ENCODE measurements at regions of chr2 and their contacts with region 1.

Region 1: GRCh38 chr2:74482801-74483674 is at the starts of genes CCDC142 and TTC31:
- DNase-seq: peak; percentile 97
- H3K4me3 Mint-ChIP-seq: peak within 1 kb of the TSS; percentile 91
- H3K27ac Mint-ChIP-seq: peak within 1 kb of the TSS; percentile 99
- H3K4me1 Mint-ChIP-seq: peaks cover 33% of the 10 kb centered on the region
- H3K27me3 Mint-ChIP-seq: no peaks in the 10 kb centered on the region
- total RNA-seq, gene CCDC142: 26.5 and 26.9 TPM in 2 replicates
- total RNA-seq, gene TTC31: 27.1 and 31.5 TPM in 2 replicates

Region 2: DNA sequence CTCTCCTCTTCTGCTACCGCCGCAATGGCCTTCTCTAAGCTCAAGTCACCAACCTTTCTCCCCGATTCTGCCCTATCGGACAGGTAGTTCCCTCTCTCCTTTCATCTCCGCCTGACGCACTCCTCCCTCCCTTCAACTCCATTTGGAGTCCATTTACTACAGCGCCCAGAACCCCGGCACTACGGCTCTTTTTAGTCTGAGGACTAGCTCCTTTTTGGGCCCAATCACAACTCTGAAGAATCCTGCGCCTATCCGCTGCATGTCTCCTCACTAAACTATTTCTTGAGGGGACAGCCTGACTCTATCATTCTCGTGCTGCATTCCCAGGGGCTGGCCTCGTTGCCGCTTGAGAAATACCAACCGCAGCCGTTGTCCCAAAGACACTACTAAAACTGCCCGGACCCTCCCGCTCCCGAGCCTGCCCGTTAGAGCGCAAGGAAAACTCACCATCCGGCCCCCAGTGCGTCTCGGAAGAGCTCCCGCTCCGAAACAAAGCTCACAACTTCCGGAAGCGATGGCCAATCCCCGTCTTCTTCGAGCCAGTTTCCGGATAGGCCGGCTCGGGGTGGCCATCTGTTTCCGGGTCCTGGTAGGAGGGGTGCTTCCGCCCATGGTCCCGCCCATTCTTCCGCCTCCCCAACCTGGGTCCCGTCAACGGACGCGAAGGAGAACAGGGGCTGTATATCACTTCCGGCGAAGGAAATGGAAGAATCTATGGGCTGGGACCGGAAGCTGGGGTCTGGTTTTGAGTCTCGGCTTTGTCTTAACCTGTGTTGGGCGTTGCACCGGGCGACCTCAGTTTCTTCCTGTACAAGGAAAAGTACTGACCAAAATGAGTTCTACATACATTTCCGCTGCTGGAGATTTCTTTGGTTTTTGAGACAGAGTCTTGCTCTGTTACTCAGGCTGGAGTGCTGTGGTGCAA is 745.9 kb before region 1 on chr2 and contains the start of gene TPRKB:
- intact Hi-C with region 1: loop called (anchors 1 kb)
- DNase-seq: peak; percentile 98
- H3K4me3 Mint-ChIP-seq: peak within 1 kb of the TSS; percentile 100
- H3K27ac Mint-ChIP-seq: peak within 1 kb of the TSS; percentile 91
- H3K4me1 Mint-ChIP-seq: peaks cover 10% of the 10 kb centered on the region
- H3K27me3 Mint-ChIP-seq: no peaks in the 10 kb centered on the region
- total RNA-seq, gene TPRKB: 37.6 and 38.5 TPM in 2 replicates

Region 3: DNA sequence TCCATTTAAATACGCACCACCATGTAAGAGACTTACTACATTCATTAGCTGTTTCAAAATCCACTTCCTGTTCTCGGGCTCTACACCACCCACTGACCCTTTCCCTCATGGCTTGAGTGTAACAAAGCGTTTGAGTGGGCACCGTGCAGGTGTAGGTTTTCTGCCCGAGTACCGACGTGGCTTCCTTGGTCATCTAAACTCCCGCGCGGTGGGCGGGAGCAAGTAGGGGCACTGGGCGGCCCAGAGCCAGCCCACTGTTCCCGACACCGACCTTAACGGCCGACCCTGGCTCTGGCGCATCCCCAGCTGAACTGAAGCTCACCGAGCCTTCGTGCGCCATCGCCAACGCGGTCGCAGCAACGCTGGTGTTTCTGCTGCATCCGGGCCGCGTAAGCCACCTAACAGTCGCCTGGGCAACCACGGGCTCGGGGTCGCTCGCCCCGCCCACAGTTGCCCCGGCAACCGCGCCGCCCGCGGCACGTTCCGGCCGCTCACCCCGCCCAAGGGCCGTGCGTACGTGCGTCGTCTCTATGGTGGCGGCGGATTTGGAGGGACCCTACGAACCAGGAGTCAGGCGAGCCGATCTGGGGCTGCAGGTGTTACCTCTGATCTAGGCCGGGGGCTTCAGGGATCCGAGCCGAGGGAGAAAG is 61.7 kb before region 1 on chr2 and contains the starts of genes C2orf81 and WDR54:
- intact Hi-C with region 1: loop called (anchors 2 kb)
- DNase-seq: peak; percentile 99
- H3K4me3 Mint-ChIP-seq: peak within 1 kb of the TSS; percentile 94
- H3K27ac Mint-ChIP-seq: peak within 1 kb of the TSS; percentile 96
- H3K4me1 Mint-ChIP-seq: peaks cover 20% of the 10 kb centered on the region
- H3K27me3 Mint-ChIP-seq: peaks cover 2% of the 10 kb centered on the region
- total RNA-seq, gene C2orf81: 1.7 and 2.0 TPM in 2 replicates
- total RNA-seq, gene WDR54: 72.1 and 78.2 TPM in 2 replicates

Region 4: DNA sequence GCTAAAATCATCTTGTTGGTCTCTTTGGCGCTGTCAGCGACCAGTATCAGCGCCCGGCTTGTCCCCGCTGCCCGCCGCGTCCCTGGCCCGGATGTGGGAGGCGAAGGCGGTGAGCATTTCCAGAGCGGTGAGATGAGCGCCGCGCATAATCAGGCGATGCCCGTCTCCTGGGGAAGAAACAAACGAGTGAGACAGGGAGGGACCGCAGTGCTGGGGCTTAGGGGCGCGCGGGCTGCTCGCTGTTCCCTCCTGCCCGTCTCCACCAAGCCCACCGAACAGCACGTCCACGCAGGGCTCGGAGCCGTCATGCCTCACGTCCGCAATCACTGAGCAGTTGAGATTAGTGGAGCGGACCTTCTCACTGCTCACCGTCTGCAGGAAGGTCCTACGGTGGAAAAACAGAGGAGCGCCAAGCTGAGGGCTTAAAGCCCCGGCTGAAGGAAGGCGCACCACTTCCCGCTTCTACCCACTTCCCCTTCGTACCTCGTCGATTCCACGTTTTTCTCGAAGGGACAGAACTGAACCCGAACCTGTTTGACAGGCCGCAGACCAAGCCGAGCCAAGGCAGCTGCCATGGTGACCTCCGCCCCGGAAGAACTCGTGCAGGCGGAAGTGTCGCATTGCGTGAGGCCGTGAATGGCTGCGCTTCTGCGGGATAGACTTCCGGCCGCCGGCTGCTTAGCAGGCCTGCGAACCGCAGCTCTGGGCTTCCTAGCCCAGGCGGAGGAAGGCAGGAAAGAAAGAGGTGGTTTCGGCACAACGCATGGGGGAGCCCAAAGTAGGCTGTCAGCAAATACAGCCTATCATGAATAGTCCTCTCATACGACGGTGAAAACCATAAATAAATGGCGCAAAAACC is 10.7 kb before region 1 on chr2 and contains the start of gene MRPL53:
- intact Hi-C with region 1: loop called (anchors 1 kb)
- DNase-seq: peak; percentile 99
- H3K4me3 Mint-ChIP-seq: peak within 1 kb of the TSS; percentile 99
- H3K27ac Mint-ChIP-seq: peak within 1 kb of the TSS; percentile 98
- H3K4me1 Mint-ChIP-seq: peaks cover 22% of the 10 kb centered on the region
- H3K27me3 Mint-ChIP-seq: no peaks in the 10 kb centered on the region
- total RNA-seq, gene MRPL53: 89.0 and 115 TPM in 2 replicates

Region 5: DNA sequence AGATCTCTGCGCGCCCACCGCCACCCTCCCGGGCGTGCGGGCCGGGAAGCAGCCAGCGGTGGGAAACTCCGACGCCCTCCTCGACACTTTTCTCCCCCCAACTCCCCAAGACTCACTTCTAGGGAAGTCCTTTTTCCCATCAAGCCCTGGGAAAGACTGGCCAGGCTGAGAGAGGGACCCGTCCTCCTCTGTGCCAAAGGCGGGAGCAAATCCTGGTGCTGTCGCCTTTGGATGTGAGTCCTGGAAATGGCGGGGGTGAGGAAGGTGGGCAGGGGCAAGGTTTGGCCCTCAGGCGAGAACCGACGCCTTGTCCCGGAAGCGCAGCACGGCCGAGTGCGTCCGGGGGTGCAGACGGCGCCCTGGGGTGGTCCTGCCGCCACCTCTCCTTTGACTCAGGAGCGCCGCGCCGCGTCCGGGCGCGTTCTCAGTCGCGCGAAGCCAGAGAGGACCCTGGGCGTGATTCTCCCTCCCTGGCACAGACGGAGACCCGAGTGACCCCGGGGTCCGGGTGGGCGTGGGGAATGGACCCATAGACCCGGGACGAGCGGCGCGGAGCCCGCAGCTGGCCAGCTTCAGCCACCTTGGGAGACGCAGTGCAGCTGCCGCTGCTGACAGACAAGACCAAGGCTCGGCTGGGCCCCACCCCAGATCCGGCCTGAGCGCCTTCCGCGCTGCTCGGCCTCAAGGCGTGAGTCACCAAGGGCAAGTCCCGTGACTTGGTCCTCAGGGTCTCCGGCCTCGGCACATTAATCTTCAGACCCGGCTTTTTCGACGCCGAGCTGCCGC is 19.9 kb after region 1 on chr2:
- intact Hi-C with region 1: loop called (anchors 2 kb)
- DNase-seq: peak; percentile 85
- H3K4me3 Mint-ChIP-seq: peak overlapping the region; percentile 77
- H3K27ac Mint-ChIP-seq: peak overlapping the region; percentile 58
- H3K4me1 Mint-ChIP-seq: peaks cover 59% of the 10 kb centered on the region
- H3K27me3 Mint-ChIP-seq: peaks cover 46% of the 10 kb centered on the region

Region 6: DNA sequence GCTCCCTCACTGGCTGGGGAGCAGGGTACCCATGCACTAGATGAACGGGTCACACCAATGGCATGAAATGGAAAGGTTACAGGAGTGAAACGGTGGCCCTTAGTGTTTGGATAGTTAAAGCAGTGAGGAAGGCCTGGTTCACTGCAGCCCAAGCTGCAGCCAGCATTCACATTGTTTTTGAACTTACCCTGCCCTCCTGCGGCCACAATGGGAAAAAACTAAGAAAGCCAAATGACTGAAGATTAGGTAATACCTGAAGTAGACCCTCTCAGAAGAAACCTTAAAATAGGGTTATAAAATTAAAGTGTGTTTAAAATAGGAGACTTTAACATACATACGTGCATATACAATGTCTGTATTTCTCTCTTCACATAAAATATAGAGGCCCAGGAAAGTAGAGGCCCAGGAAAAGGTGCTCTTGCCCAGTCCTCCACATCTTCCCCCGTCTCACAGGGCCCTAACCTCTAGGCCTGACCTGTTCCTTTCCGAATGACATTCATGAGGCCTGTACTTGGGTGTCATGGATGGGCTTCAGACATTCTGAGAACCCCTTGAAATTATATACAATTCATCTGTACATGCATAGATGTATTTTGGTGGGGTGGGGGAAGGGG is 104.7 kb after region 1 on chr2:
- intact Hi-C with region 1: loop called (anchors 1 kb)
- DNase-seq: peak; percentile 90
- H3K4me3 Mint-ChIP-seq: no peak overlapping the region
- H3K27ac Mint-ChIP-seq: peak overlapping the region; percentile 49
- H3K4me1 Mint-ChIP-seq: peaks cover 27% of the 10 kb centered on the region
- H3K27me3 Mint-ChIP-seq: peaks cover 22% of the 10 kb centered on the region

Measured in activated CD4-positive, alpha-beta T cell treated with anti-CD3 and anti-CD28 coated beads, Interleukin-2, amount 10 ng/mL, durations not matched to agents 24 days and 14 days (primary cell).